Left ventricle myocardium superior (tissue), 1 donor: ENCODE measurements at regions of chr6 and their contacts with region 1.

Region 1: GRCh38 chr6:32177788-32178546 is at the start of gene RNF5:
- DNase-seq: peak; percentile 94
- ATAC-seq: peak; percentile 84
- total RNA-seq, gene RNF5: 94.1 TPM

Region 2: DNA sequence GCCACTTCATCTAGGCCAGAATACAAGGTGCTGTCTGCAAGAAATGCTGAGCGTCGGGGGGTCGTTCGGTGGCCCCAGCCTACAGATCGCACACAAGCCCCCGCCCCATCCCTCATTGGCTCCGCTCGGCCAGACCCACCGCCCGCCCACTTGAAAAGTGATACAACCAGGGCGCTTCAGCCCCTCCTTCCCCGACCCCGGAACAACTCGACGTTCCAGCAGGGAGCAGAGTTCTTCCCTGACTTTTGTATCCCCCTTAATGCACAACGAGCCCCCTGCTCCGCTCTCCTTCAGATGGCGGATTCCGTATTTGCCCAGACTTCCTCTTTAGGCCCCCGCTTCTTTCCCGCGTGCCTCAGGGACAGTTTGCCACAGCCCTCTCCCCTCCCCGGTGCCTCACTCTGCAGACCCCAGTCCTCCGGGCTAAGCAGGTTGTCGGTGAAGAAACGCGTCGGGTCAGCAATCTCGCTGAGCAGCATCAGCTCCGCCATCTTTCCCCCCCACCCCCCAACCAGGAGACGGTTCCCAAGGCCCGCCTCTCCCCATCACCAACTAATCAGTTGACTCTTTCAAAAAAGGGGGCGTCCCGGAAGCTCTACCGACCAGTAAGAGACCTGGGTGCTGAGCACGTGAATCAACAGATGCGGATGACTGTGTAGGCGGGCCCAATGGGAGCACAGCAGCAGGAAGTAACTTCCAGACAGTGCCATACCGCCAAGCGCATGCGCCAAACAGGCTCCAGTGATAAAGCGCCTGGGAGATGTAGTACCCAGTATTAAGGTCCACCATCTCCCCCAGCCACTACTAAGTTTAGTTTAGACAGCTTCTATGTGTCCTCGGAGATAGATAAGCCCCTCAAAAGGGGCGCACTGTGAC is 50.0 kb before region 1 on chr6 and contains the start of gene ATF6B:
- intact Hi-C with region 1: loop called (anchors 10 kb)
- DNase-seq: peak; percentile 97
- ATAC-seq: peak; percentile 93
- total RNA-seq, gene ATF6B: 26.8 TPM